ENCODE measurements at regions of chr3 and their contacts with region 1.

Region 1: DNA sequence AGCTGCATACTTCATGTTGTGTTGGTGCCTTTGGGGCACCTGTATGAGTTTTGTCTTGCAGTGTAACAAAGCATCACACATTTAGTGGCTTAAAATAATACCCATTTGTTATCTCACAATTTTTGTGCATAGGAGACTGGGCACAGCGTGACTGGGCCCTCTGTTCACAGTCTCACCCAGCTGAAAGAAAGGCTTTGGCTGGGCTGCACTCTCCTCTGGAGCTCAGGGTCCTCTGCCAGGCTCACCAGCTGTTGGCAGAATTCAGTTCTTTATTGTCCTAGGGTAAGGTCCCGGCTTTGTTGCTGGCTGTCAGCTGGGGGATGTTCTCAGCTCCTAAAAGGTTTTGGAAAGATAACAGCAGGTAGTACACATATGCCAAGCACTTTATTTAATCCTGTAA is 263.3 kb downstream of the CLSTN2 start:
- DNase-seq: peak; percentile 13 to 86 (median 77)
- H3K4me3 ChIP-seq: no peak overlapping the region
- H3K27ac ChIP-seq: peak overlapping the region in 34 of 59 donors; percentile 2 to 79 (median 44)
- H3K27me3 ChIP-seq: no peaks in the 10 kb centered on the region
- CTCF ChIP-seq: peak in 5 of 56 donors; percentile 9 to 37 (median 16)

Region 2: GRCh38 chr3:140164922-140165590 is 33.2 kb before region 1 on chr3:
- intact Hi-C with region 1: no loop called
- DNase-seq: no peak
- H3K4me3 ChIP-seq: no peak overlapping the region
- H3K27ac ChIP-seq: no peak overlapping the region
- H3K27me3 ChIP-seq: no peaks in the 10 kb centered on the region
- CTCF ChIP-seq: no peak

Region 3: DNA sequence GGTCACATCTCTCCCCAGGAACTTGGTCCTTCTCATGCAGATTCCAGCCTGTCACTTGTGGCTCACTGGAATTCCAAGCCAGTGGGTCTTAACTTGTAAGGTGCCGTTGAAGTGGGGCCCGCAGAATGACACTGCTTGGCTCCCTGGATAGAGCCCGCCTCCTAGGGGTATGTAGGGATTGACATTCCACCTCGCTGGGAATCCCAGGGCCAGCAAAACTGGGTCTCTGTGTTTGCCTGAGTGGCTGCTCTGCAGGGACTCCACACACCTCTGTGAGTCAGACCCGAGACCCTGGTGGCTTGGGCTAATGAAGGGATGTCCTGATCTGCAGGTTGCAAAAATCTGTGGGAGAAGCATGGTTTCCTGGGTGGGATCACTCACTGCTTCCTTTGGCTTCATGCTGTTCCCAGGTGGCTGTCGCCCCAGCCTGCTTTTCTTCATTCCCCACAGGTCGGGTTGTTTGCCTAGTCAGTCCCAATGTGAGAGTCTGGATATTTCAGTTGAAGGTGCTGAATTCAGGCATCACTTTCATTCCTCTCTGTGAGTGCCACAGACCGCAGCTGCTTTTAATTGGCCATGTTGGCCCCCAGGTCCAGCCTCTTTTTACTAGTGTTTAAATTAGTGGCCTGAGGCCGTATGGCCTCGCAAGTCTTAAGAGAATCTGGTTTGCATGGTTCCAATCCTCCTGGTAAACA is 323.7 kb after region 1 on chr3:
- intact Hi-C with region 1: loop called in 1 of 2 experiments (anchors 5 kb)
- DNase-seq: no peak
- H3K4me3 ChIP-seq: no peak overlapping the region
- H3K27ac ChIP-seq: no peak overlapping the region
- H3K27me3 ChIP-seq: peaks cover 0 to 2% (median 0%) of the 10 kb centered on the region in 45 donors
- CTCF ChIP-seq: no peak